ENCODE measurements at regions of chr15 and their contacts with region 1.

Region 1: GRCh38 chr15:85563328-85563727 is 182.9 kb downstream of the AKAP13 start:
- DNase-seq: no peak
- ATAC-seq: no peak
- H3K4me3 ChIP-seq: no peak overlapping the region
- H3K27ac ChIP-seq: no peak overlapping the region
- H3K4me1 ChIP-seq: no peaks in the 10 kb centered on the region
- H3K27me3 ChIP-seq: no peaks in the 10 kb centered on the region
- CTCF ChIP-seq: no peak

Region 2: DNA sequence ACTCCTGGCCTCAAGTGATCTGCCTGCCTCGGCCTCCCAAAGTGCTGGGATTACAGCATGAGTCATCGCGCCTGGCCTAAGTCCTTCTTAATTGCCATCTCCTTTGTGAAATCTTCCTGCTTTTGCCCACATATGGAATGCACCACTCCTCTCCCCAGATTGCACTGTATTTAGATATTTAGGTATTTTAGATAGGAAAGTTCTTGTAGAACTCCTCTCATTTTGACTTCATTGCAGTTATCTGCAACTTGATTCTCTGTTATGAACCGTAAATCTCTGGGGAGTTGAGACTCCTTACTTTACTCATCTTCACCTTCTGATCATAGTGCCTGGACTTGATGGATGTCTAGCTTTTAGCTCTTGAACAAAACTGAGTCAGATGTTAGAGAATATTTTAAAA is 32.2 kb before region 1 on chr15:
- CTCF ChIA-PET with region 1: interaction called, 11 read pairs
- POLR2A ChIA-PET with region 1: no interaction called
- intact Hi-C with region 1: no loop called
- DNase-seq: no peak
- ATAC-seq: no peak
- H3K4me3 ChIP-seq: no peak overlapping the region
- H3K27ac ChIP-seq: no peak overlapping the region
- H3K4me1 ChIP-seq: no peaks in the 10 kb centered on the region
- H3K27me3 ChIP-seq: no peaks in the 10 kb centered on the region
- CTCF ChIP-seq: no peak

Region 3: GRCh38 chr15:85976986-85977385 is 413.7 kb after region 1 on chr15:
- CTCF ChIA-PET with region 1: no interaction called
- POLR2A ChIA-PET with region 1: no interaction called
- intact Hi-C with region 1: no loop called
- DNase-seq: peak; percentile 38
- ATAC-seq: no peak
- H3K4me3 ChIP-seq: no peak overlapping the region
- H3K27ac ChIP-seq: no peak overlapping the region
- H3K4me1 ChIP-seq: no peaks in the 10 kb centered on the region
- H3K27me3 ChIP-seq: peaks cover 22% of the 10 kb centered on the region
- CTCF ChIP-seq: no peak

Measured in PC-3 (cell line).